Adrenal gland (tissue), 19 donors: ENCODE measurements at regions of chr4 and their contacts with region 1.

Region 1: DNA sequence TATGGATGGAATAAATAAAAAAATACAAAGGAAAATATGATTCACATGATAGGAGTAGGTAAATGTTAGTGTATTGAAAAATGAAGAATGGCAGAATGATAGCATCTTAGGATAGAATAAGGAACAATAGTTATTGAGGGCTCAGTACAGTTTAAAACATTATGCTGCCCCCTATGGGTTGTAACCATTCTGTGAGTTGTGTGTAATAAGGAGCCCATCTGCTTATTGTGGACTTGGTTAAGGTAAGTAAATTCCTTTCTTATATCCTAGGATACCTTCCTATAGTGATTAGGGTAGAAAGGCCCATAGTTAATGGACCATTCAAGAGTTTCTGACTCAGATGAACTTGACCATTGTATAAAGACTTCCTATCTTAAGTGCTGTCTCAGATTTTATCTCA is 195.8 kb downstream of the PDHA2 start:
- DNase-seq: peak in 3 of 7 donors; percentile 11 to 23 (median 18)
- H3K4me3 ChIP-seq: no peak overlapping the region
- H3K27ac ChIP-seq: no peak overlapping the region
- H3K4me1 ChIP-seq: no peaks in the 10 kb centered on the region
- H3K27me3 ChIP-seq: no peaks in the 10 kb centered on the region
- CTCF ChIP-seq: peak; percentile 19 to 56 (median 41)
- POLR2A ChIP-seq: no peak

Region 2: GRCh38 chr4:95165926-95166524 is 869.7 kb before region 1 on chr4:
- intact Hi-C with region 1: loop called in 1 of 2 experiments (anchors 10 kb)
- DNase-seq: peak; percentile 27 to 68 (median 38)
- H3K4me3 ChIP-seq: no peak overlapping the region
- H3K27ac ChIP-seq: no peak overlapping the region
- H3K4me1 ChIP-seq: no peaks in the 10 kb centered on the region
- H3K27me3 ChIP-seq: no peaks in the 10 kb centered on the region
- CTCF ChIP-seq: peak; percentile 64 to 79 (median 74)
- POLR2A ChIP-seq: no peak